Activated CD4-positive, alpha-beta memory T cell treated with anti-CD3 and anti-CD28 coated beads, Interleukin-2, amount 10 ng/mL, durations not matched to agents 7 days and 5 days (primary cell): ENCODE measurements at regions of chr1 and their contacts with region 1.

Region 1: DNA sequence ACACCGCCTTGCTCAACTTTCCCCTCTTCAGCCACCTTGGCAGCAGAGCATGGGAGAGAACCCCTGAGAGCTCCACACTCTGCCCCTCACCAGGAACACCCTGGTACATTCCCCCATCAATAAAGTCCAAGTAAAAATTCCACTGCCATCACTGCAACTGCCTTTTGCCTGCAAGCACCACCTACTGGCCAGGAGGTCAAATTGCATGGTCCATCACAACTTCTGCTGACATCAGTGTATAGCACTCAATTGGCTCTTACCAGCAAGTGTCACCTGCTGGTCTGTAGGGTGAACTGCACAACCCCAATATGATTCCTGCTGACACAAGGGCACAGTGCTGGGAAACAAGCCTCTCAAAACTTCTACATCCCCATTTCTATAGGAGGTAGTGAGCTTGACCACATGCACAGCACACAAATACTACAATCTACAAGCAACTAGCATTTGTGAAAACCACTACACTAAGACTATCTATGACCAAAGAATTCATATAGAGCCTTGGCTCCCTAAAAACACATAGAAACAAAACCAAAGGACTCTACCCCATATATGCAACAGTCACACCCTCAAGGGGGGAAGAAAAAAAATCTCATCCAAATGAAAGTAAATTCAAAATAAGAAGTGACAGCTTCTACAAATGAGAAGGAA is 69.2 kb downstream of the FASLG start:
- DNase-seq: peak; percentile 59
- H3K4me3 Mint-ChIP-seq: no peak overlapping the region
- H3K27ac Mint-ChIP-seq: no peak overlapping the region
- H3K4me1 Mint-ChIP-seq: peaks cover 26% of the 10 kb centered on the region
- H3K27me3 Mint-ChIP-seq: peaks cover 33% of the 10 kb centered on the region

Region 2: DNA sequence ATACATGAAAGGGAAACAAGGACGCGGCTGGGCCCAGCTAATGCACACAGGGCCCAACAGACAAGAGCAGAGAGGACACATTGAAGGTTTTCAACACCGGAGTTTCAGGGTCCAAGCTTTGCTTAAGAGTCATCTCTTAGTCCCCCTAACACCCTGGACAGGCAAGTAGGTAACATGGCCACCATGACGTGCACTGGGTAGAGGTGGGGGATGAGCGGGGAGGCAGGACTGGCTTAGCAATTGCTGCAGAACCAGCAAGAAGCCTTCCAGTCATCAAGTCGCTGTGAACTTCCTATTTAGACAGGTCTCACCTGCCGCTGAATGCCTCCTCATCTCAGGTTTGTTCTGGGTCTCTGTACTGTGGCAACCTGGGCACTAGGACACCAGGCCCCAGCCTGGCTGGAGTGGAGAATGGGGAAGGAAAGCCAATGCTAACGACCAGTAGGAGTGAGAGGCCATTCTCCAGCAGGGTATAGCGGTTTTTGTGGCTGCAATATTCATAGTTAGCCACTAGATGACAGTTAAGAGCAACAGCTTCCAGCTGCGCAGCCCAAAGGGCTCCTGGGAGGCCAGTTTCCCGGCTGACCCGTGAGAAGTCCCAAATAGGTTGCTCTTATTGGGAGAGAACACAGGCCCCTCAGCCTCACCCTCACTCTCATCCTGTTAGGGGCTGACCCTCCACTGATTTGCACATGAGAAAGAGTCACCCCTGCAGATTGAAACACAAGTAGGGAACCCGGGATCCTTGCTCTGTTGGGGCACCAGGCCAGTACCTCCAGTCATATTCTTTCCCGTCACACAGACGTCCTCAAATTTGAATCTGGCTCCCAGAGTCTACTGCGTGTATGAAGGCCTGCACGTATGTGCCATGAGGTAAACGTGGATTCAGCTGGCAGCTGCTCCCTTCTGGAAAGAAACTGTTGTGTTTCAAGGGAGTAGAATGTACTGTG is 278.2 kb before region 1 on chr1:
- CTCF ChIA-PET with region 1: interaction called, 13 read pairs
- POLR2A ChIA-PET with region 1: interaction called, 4 read pairs
- DNase-seq: peak; percentile 48
- H3K4me3 Mint-ChIP-seq: no peak overlapping the region
- H3K27ac Mint-ChIP-seq: no peak overlapping the region
- H3K4me1 Mint-ChIP-seq: peaks cover 32% of the 10 kb centered on the region
- H3K27me3 Mint-ChIP-seq: peaks cover 1% of the 10 kb centered on the region

Region 3: GRCh38 chr1:172609528-172609927 is 118.6 kb before region 1 on chr1:
- CTCF ChIA-PET with region 1: interaction called, 71 read pairs
- POLR2A ChIA-PET with region 1: interaction called, 3 read pairs
- DNase-seq: no peak
- H3K4me3 Mint-ChIP-seq: no peak overlapping the region
- H3K27ac Mint-ChIP-seq: no peak overlapping the region
- H3K4me1 Mint-ChIP-seq: no peaks in the 10 kb centered on the region
- H3K27me3 Mint-ChIP-seq: no peaks in the 10 kb centered on the region

Region 4: DNA sequence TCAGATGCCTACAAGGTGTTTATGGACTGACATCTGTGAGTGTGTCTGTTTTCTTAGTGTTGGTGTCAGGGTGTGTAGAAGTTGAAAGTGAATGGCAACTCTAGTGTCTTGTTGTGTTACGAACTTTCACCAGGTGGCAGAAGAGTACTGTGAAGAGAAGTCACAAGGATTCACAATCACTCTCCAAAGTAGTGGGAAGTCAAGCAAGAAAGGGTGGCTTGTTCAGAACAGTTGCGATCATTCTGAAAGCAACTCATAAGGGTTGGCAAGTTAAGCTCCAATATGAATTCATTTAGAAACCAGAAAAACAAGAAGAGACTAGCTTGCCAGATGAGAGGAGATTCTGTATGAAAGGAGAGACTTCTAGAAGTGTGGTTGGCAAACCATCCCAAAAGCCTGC is 16.9 kb after region 1 on chr1:
- CTCF ChIA-PET with region 1: interaction called, 31 read pairs
- POLR2A ChIA-PET with region 1: no interaction called
- DNase-seq: peak; percentile 34
- H3K4me3 Mint-ChIP-seq: no peak overlapping the region
- H3K27ac Mint-ChIP-seq: no peak overlapping the region
- H3K4me1 Mint-ChIP-seq: peaks cover 26% of the 10 kb centered on the region
- H3K27me3 Mint-ChIP-seq: peaks cover 64% of the 10 kb centered on the region